ENCODE measurements at regions of chr18 and their contacts with region 1.

Region 1: DNA sequence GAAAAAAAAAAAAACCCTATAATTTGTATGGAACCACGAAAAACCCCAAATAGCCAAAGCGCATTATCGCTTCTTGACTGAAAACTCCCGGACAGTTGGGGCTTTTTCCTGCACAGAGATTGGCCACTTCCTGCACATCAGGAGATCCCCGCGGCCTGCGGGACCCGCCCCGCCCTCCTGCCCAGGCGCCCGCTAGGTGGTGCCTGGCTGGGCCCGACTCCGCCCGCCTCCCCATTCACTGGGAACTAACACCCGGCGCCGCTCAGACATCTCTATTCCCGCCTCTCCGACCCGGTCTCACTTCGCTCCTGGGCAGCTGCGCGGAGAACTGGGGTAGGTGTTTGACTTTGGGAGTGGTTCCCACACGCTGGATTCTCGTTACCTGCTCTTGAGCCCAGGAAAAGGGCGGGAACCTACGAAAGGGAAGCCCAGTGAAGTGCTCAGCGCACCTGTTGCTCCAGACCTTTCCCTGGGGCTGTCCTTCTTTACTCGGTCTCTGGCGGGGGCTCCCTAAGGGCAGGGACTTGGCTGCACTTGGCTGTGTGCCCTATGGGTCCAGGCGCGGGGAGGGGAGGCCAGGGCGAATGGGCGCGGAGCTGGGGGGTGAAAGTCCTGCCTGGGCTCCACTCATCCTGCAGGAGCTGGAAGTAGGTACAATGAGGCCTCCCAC is at the start of gene HMSD:
- DNase-seq: peak; percentile 88
- H3K4me3 Mint-ChIP-seq: peak within 1 kb of the TSS; percentile 85
- H3K27ac Mint-ChIP-seq: peak within 1 kb of the TSS; percentile 86
- H3K4me1 Mint-ChIP-seq: peaks cover 45% of the 10 kb centered on the region
- H3K27me3 Mint-ChIP-seq: peaks cover 13% of the 10 kb centered on the region
- total RNA-seq, gene HMSD: 18.9 to 19.5 TPM

Region 2: GRCh38 chr18:62505669-62506494 is 1443.3 kb before region 1 on chr18:
- CTCF ChIA-PET with region 1: no interaction called
- POLR2A ChIA-PET with region 1: no interaction called
- intact Hi-C with region 1: loop called (anchors 1 kb)
- DNase-seq: peak; percentile 66
- H3K4me3 Mint-ChIP-seq: peak overlapping the region; percentile 58
- H3K27ac Mint-ChIP-seq: peak overlapping the region; percentile 88
- H3K4me1 Mint-ChIP-seq: peaks cover 24% of the 10 kb centered on the region
- H3K27me3 Mint-ChIP-seq: no peaks in the 10 kb centered on the region

Region 3: DNA sequence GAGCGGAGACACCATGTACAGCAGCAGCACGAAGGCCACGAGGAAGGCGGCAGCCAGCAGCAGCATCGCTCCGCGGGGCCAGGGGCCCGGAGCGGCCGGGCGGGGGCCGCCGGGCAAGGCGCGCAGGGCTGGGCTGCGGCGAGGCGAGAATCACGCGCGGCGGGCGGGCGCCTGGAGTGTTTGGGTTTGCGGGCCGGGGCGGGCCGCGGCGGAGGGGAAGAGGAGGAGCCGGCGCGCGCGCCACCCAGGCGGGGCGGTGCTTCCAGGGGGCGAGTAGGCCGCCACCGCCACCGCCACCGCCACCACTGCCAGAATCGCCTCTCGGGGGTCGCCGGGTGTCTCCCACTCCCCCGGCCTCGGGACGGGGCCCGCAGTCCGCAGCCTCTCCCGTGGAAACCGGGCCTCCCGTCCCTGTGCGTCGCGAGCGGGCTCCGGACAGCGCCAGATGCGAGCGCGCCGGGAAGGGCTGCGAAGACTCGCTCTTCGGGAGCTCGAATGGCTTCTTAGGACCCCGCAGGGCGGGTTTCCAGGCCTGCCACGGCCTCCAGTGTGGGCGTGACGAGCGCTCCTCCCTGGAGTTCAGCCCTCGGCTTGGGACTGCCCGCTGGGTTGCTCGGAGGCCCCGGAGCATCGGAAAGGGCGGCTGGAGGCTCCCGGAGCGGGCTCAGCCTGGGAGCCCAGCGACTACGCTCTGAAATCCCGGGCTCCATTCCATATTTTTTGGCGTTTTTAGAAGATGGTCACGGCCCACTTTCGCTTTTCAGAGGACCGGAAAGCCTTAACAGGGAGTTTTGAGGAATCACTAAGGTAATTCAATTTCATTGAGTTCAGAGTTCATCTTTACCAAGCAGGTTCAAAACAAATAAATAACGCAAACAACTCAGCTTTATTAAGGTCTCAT is 581.9 kb before region 1 on chr18 and contains the start of gene KDSR:
- CTCF ChIA-PET with region 1: no interaction called
- POLR2A ChIA-PET with region 1: no interaction called
- intact Hi-C with region 1: loop called (anchors 10 kb)
- DNase-seq: peak; percentile 89
- H3K4me3 Mint-ChIP-seq: peak within 1 kb of the TSS; percentile 90
- H3K27ac Mint-ChIP-seq: peak within 1 kb of the TSS; percentile 86
- H3K4me1 Mint-ChIP-seq: peaks cover 29% of the 10 kb centered on the region
- H3K27me3 Mint-ChIP-seq: no peaks in the 10 kb centered on the region
- total RNA-seq, gene KDSR: 72.8 to 77.2 TPM

Region 4: GRCh38 chr18:63832470-63832869 is 116.7 kb before region 1 on chr18:
- CTCF ChIA-PET with region 1: no interaction called
- POLR2A ChIA-PET with region 1: no interaction called
- intact Hi-C with region 1: loop called (anchors 1 kb)
- DNase-seq: no peak
- H3K4me3 Mint-ChIP-seq: no peak overlapping the region
- H3K27ac Mint-ChIP-seq: no peak overlapping the region
- H3K4me1 Mint-ChIP-seq: peaks cover 4% of the 10 kb centered on the region
- H3K27me3 Mint-ChIP-seq: peaks cover 17% of the 10 kb centered on the region

Region 5: GRCh38 chr18:63882333-63883141 is 66.7 kb before region 1 on chr18:
- CTCF ChIA-PET with region 1: no interaction called
- POLR2A ChIA-PET with region 1: no interaction called
- intact Hi-C with region 1: loop called (anchors 2 kb)
- DNase-seq: no peak
- H3K4me3 Mint-ChIP-seq: no peak overlapping the region
- H3K27ac Mint-ChIP-seq: no peak overlapping the region
- H3K4me1 Mint-ChIP-seq: peaks cover 13% of the 10 kb centered on the region
- H3K27me3 Mint-ChIP-seq: peaks cover 12% of the 10 kb centered on the region

Region 6: GRCh38 chr18:63924551-63924950 is 24.7 kb before region 1 on chr18:
- CTCF ChIA-PET with region 1: no interaction called
- POLR2A ChIA-PET with region 1: no interaction called
- intact Hi-C with region 1: no loop called
- DNase-seq: no peak
- H3K4me3 Mint-ChIP-seq: no peak overlapping the region
- H3K27ac Mint-ChIP-seq: no peak overlapping the region
- H3K4me1 Mint-ChIP-seq: no peaks in the 10 kb centered on the region
- H3K27me3 Mint-ChIP-seq: peaks cover 24% of the 10 kb centered on the region

Region 7: GRCh38 chr18:63963615-63964256 is 14.5 kb after region 1 on chr18:
- CTCF ChIA-PET with region 1: interaction called, 35 read pairs
- POLR2A ChIA-PET with region 1: interaction called, 3 read pairs
- intact Hi-C with region 1: loop called (anchors 1 kb)
- DNase-seq: peak; percentile 61
- H3K4me3 Mint-ChIP-seq: no peak overlapping the region
- H3K27ac Mint-ChIP-seq: no peak overlapping the region
- H3K4me1 Mint-ChIP-seq: peaks cover 14% of the 10 kb centered on the region
- H3K27me3 Mint-ChIP-seq: peaks cover 13% of the 10 kb centered on the region

Region 8: DNA sequence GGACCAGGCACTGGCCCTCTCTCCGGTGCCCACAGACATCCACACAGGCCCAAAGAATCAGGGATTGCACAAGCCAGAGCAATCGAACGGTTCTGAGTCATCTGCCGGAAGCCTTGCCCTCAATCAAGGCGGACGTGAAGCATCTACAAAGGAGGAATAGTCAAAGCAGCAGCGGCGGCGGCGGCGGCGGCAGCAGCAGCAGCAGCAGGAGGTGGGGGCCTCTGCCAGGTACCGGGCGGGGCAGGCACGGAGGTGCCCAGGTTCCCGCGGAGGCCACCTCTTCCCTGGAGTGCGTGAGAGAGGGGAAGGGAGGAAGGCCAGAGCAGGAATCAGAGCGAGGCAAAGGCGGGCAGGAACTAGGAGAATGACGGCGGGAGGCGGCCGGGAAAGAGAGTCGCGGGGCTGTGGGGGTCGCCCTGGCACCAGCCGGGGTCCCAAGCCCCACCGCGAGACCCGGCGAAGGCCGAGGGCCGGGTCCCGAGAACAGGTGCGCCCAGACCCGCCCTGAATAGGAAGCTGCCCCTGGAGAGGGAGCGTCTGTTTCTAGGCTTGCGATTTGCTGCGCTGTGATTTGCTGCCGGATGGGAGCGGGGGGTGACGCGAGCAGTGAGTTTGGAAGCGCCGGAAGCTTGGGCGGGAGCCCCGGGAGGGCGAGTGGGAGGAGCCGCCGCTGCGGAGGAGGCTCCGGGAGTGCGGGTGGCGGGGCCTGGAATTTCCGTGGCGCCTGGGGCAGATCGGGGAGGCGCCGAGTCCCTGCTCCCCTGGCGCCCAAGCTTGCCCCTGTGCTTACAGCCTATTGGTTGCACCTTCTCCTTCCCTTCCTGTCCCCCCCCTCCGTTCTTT is 21.0 kb after region 1 on chr18 and contains the start of gene SERPINB8:
- CTCF ChIA-PET with region 1: interaction called, 35 read pairs
- POLR2A ChIA-PET with region 1: interaction called, 3 read pairs
- intact Hi-C with region 1: loop called (anchors 1 kb)
- DNase-seq: peak; percentile 91
- H3K4me3 Mint-ChIP-seq: peak within 1 kb of the TSS; percentile 88
- H3K27ac Mint-ChIP-seq: peak within 1 kb of the TSS; percentile 95
- H3K4me1 Mint-ChIP-seq: peaks cover 41% of the 10 kb centered on the region
- H3K27me3 Mint-ChIP-seq: no peaks in the 10 kb centered on the region
- total RNA-seq, gene SERPINB8: 14.6 to 14.9 TPM

Measured in activated CD4-positive, alpha-beta memory T cell treated with anti-CD3 and anti-CD28 coated beads for 36 hours (primary cell).